ENCODE measurements at regions of chr2 and their contacts with region 1.

Region 1: DNA sequence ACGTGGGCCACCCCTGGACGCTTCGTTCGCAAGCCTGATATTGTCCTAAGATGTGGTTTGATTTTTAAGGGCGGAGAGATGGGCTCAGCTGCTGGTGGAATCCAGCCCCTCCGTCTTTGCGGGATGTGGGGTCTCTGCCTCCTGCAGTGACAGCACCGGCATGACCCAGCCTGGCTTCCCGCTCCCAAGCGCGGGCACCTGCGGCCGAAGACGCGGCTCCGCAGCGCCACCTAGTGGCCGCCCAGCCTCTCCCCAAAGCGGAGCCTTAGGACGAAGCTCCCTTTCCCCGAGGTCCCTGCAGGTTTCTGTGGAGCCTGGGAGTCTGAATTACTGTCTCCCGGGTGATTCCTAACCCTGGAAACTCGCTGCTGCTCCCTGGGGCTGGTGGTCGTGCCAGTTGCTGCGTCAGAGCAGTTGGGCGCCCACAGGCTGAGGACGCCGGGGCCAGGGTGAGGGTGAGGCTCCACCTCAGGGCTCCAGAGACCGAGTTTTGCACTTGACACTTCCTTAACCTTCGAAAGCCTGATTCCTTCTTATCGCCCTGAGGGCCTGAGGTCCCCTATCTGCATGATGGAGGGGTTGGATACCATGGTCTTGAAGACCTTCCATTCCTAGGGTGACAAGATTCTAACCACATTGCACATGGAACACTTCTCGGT is 137.5 kb downstream of the TPO start:
- DNase-seq: peak; percentile 27
- H3K4me3 ChIP-seq: no peak overlapping the region
- H3K27ac ChIP-seq: no peak overlapping the region
- H3K4me1 ChIP-seq: no peaks in the 10 kb centered on the region
- H3K27me3 ChIP-seq: no peaks in the 10 kb centered on the region
- CTCF ChIP-seq: peak; percentile 93 to 99
- POLR2A ChIP-seq: no peak

Region 2: GRCh38 chr2:714005-714741 is 836.6 kb before region 1 on chr2:
- CTCF ChIA-PET with region 1: interaction called, 11 read pairs
- POLR2A ChIA-PET with region 1: no interaction called
- dilution Hi-C with region 1: no loop called
- intact Hi-C with region 1: no loop called
- DNase-seq: peak; percentile 8
- H3K4me3 ChIP-seq: no peak overlapping the region
- H3K27ac ChIP-seq: no peak overlapping the region
- H3K4me1 ChIP-seq: no peaks in the 10 kb centered on the region
- H3K27me3 ChIP-seq: no peaks in the 10 kb centered on the region
- CTCF ChIP-seq: peak; percentile 37 to 52
- POLR2A ChIP-seq: no peak

Region 3: DNA sequence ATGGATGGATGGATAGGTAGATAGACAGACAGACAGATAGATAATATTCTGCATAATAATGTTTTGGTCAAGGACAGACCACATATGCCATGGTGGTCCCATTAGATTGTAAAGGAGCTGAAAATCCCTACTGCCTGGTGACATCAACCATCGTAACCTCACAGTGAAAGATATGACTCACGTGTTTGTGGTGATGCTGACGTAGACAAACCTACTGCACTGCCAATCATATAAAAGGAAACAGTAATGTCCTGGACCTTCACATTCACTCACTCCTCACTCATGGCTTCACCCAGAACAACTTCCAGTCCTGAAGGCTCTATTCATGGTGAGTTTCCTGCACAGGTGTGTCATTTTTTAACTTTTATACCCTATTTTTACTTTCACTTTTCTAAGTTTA is 340.4 kb before region 1 on chr2:
- CTCF ChIA-PET with region 1: no interaction called
- POLR2A ChIA-PET with region 1: no interaction called
- dilution Hi-C with region 1: no loop called
- intact Hi-C with region 1: no loop called
- DNase-seq: no peak
- H3K4me3 ChIP-seq: no peak overlapping the region
- H3K27ac ChIP-seq: no peak overlapping the region
- H3K4me1 ChIP-seq: no peaks in the 10 kb centered on the region
- H3K27me3 ChIP-seq: no peaks in the 10 kb centered on the region
- CTCF ChIP-seq: no peak
- POLR2A ChIP-seq: no peak

Region 4: GRCh38 chr2:1227274-1227900 is 323.4 kb before region 1 on chr2:
- CTCF ChIA-PET with region 1: no interaction called
- POLR2A ChIA-PET with region 1: no interaction called
- dilution Hi-C with region 1: no loop called
- intact Hi-C with region 1: no loop called
- DNase-seq: no peak
- H3K4me3 ChIP-seq: no peak overlapping the region
- H3K27ac ChIP-seq: no peak overlapping the region
- H3K4me1 ChIP-seq: no peaks in the 10 kb centered on the region
- H3K27me3 ChIP-seq: no peaks in the 10 kb centered on the region
- CTCF ChIP-seq: no peak
- POLR2A ChIP-seq: no peak

Region 5: GRCh38 chr2:1493431-1494126 is 57.2 kb before region 1 on chr2:
- CTCF ChIA-PET with region 1: no interaction called
- POLR2A ChIA-PET with region 1: no interaction called
- dilution Hi-C with region 1: no loop called
- intact Hi-C with region 1: no loop called
- DNase-seq: no peak
- H3K4me3 ChIP-seq: no peak overlapping the region
- H3K27ac ChIP-seq: no peak overlapping the region
- H3K4me1 ChIP-seq: no peaks in the 10 kb centered on the region
- H3K27me3 ChIP-seq: no peaks in the 10 kb centered on the region
- CTCF ChIP-seq: no peak
- POLR2A ChIP-seq: no peak

Region 6: GRCh38 chr2:1527153-1527992 is 23.4 kb before region 1 on chr2:
- CTCF ChIA-PET with region 1: no interaction called
- POLR2A ChIA-PET with region 1: no interaction called
- dilution Hi-C with region 1: no loop called
- intact Hi-C with region 1: no loop called
- DNase-seq: no peak
- H3K4me3 ChIP-seq: no peak overlapping the region
- H3K27ac ChIP-seq: no peak overlapping the region
- H3K4me1 ChIP-seq: no peaks in the 10 kb centered on the region
- H3K27me3 ChIP-seq: no peaks in the 10 kb centered on the region
- CTCF ChIP-seq: no peak
- POLR2A ChIP-seq: no peak

Region 7: DNA sequence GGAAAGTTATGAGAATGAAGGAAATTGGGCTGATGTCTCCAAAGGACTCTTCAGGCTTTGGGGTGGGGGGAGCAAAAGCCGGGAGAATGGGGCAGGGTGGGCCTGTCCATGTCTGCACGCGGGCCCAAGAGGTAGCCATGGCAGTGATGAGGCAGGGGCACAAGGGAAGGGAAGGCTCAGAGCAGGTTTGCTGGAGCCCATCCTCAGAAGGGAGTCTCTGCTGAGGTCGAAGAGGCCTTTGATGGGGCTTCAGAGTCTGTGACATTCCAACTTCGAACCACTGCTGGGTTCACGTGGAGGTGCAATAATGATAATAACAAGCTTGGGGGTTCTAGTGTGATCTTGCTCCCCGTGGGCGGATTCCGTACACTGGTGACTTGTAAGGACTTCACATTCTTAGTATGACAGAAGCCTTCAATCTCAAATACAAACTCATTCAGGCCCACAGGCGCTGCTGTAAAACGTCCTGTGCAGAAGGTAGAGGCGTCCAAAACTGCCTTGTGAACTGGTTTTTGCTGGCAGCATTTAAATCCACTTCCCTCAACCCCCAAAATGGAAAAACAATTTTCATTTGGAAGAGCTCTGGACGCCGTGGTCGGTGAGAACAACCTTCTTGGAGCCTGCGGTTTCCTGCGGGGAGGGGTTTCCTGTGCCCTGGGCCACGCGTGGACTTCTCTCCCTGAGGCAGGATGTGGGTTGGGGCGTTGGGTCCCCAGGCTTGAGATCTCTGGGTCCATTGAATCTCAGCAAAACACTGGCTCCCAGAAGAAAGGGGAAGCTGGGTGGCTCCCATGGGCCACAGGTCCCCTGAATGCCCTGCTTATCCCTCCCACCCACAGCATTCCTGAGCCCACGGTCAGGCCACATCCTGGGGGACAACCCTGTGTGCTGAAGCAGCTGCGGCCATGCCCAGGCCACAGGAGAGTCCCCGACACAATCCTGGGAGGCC is 13.4 kb after region 1 on chr2:
- CTCF ChIA-PET with region 1: interaction called, 13 read pairs
- POLR2A ChIA-PET with region 1: no interaction called
- dilution Hi-C with region 1: no loop called
- intact Hi-C with region 1: no loop called
- DNase-seq: no peak
- H3K4me3 ChIP-seq: no peak overlapping the region
- H3K27ac ChIP-seq: no peak overlapping the region
- H3K4me1 ChIP-seq: no peaks in the 10 kb centered on the region
- H3K27me3 ChIP-seq: no peaks in the 10 kb centered on the region
- CTCF ChIP-seq: no peak
- POLR2A ChIP-seq: no peak

Region 8: GRCh38 chr2:1591978-1592907 is 41.5 kb after region 1 on chr2:
- CTCF ChIA-PET with region 1: interaction called, 11 read pairs
- POLR2A ChIA-PET with region 1: no interaction called
- dilution Hi-C with region 1: no loop called
- intact Hi-C with region 1: no loop called
- DNase-seq: peak; percentile 79
- H3K4me3 ChIP-seq: no peak overlapping the region
- H3K27ac ChIP-seq: no peak overlapping the region
- H3K4me1 ChIP-seq: peaks cover 12% of the 10 kb centered on the region
- H3K27me3 ChIP-seq: no peaks in the 10 kb centered on the region
- CTCF ChIP-seq: peak; percentile 68 to 83
- POLR2A ChIP-seq: no peak

Region 9: GRCh38 chr2:1769703-1770422 is 219.1 kb after region 1 on chr2:
- CTCF ChIA-PET with region 1: interaction called, 14 read pairs
- POLR2A ChIA-PET with region 1: no interaction called
- dilution Hi-C with region 1: no loop called
- intact Hi-C with region 1: no loop called
- DNase-seq: peak; percentile 51
- H3K4me3 ChIP-seq: no peak overlapping the region
- H3K27ac ChIP-seq: no peak overlapping the region
- H3K4me1 ChIP-seq: no peaks in the 10 kb centered on the region
- H3K27me3 ChIP-seq: no peaks in the 10 kb centered on the region
- CTCF ChIP-seq: peak; percentile 80
- POLR2A ChIP-seq: no peak

Measured in endothelial cell of umbilical vein (primary cell).